ENCODE measurements at regions of chr12 and their contacts with region 1.

Region 1: GRCh38 chr12:5988659-5989116 is 43.6 kb upstream of the ANO2 start:
- DNase-seq: peak; percentile 79 to 83
- H3K4me3 ChIP-seq: no peak overlapping the region
- H3K27ac ChIP-seq: no peak overlapping the region
- H3K4me1 ChIP-seq: no peaks in the 10 kb centered on the region
- H3K27me3 ChIP-seq: no peaks in the 10 kb centered on the region
- CTCF ChIP-seq: peak; percentile 82 to 98 (median 92)
- POLR2A ChIP-seq: no peak

Region 2: GRCh38 chr12:5758347-5758746 is 230.3 kb before region 1 on chr12:
- intact Hi-C with region 1: no loop called
- DNase-seq: no peak
- H3K4me3 ChIP-seq: no peak overlapping the region
- H3K27ac ChIP-seq: no peak overlapping the region
- H3K4me1 ChIP-seq: no peaks in the 10 kb centered on the region
- H3K27me3 ChIP-seq: no peaks in the 10 kb centered on the region
- CTCF ChIP-seq: no peak
- POLR2A ChIP-seq: no peak

Region 3: GRCh38 chr12:6039894-6040568 is 51.3 kb after region 1 on chr12:
- intact Hi-C with region 1: loop called (anchors 5 kb)
- DNase-seq: peak; percentile 46 to 59
- H3K4me3 ChIP-seq: no peak overlapping the region
- H3K27ac ChIP-seq: no peak overlapping the region
- H3K4me1 ChIP-seq: no peaks in the 10 kb centered on the region
- H3K27me3 ChIP-seq: no peaks in the 10 kb centered on the region
- CTCF ChIP-seq: peak; percentile 72 to 91 (median 88)
- POLR2A ChIP-seq: no peak

Measured in thyroid gland (tissue), 4 donors.